CD4-positive, alpha-beta T cell (primary cell): ENCODE measurements at regions of chr17 and their contacts with region 1.

Region 1: GRCh38 chr17:28598799-28599310 is at the start of gene SPAG5:
- DNase-seq: peak; percentile 89 to 98 (median 95)
- ATAC-seq: peak; percentile 89
- H3K4me3 ChIP-seq: peak within 1 kb of the TSS; percentile 60
- H3K4me3 Mint-ChIP-seq: peak within 1 kb of the TSS; percentile 90
- H3K27ac ChIP-seq: peak within 1 kb of the TSS; percentile 92 to 99
- H3K27ac Mint-ChIP-seq: peak within 1 kb of the TSS; percentile 94
- H3K4me1 ChIP-seq: peaks cover 20% of the 10 kb centered on the region
- H3K4me1 Mint-ChIP-seq: peaks cover 24% of the 10 kb centered on the region
- H3K27me3 ChIP-seq: no peaks in the 10 kb centered on the region
- H3K27me3 Mint-ChIP-seq: no peaks in the 10 kb centered on the region
- CTCF ChIP-seq: no peak
- total RNA-seq, gene SPAG5: 15.4 to 17.0 TPM

Region 2: DNA sequence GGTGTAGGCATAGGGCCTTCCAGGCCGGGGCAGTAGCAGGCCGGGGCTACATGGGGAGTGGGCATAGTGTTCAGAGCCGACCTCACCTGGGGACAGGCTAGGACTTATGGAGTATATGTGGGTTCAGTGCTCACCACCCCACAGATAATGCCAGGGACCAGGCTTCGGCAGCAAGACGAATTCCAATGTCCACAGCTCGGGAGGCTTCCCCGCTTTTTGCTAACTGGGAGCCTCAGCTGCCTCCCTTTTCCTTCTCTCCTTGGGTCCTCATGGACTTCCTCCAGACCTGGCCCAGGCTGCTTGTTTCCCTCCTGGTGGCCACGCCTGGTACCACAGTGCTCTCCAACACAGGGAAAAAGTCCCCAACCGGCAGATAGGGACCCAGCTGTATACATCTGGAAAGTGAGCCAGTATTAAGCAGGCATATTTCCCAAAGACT is 172.8 kb before region 1 on chr17:
- CTCF ChIA-PET with region 1: no interaction called
- POLR2A ChIA-PET with region 1: no interaction called
- intact Hi-C with region 1: no loop called
- DNase-seq: no peak
- ATAC-seq: no peak
- H3K4me3 ChIP-seq: no peak overlapping the region
- H3K4me3 Mint-ChIP-seq: no peak overlapping the region
- H3K27ac ChIP-seq: no peak overlapping the region
- H3K27ac Mint-ChIP-seq: no peak overlapping the region
- H3K4me1 ChIP-seq: no peaks in the 10 kb centered on the region
- H3K4me1 Mint-ChIP-seq: no peaks in the 10 kb centered on the region
- H3K27me3 ChIP-seq: no peaks in the 10 kb centered on the region
- H3K27me3 Mint-ChIP-seq: peaks cover 22% of the 10 kb centered on the region
- CTCF ChIP-seq: no peak

Region 3: GRCh38 chr17:28571255-28572122 is 27.4 kb before region 1 on chr17 and contains the start of gene PIGS:
- CTCF ChIA-PET with region 1: interaction called, 4 read pairs
- POLR2A ChIA-PET with region 1: interaction called, 70 read pairs
- intact Hi-C with region 1: loop called (anchors 1 to 2 kb)
- DNase-seq: peak; percentile 78 to 95 (median 88)
- ATAC-seq: peak; percentile 96
- H3K4me3 ChIP-seq: peak within 1 kb of the TSS; percentile 95
- H3K4me3 Mint-ChIP-seq: peak within 1 kb of the TSS; percentile 94
- H3K27ac ChIP-seq: peak within 1 kb of the TSS; percentile 66 to 85
- H3K27ac Mint-ChIP-seq: peak within 1 kb of the TSS; percentile 91
- H3K4me1 ChIP-seq: peaks cover 55% of the 10 kb centered on the region
- H3K4me1 Mint-ChIP-seq: peaks cover 65% of the 10 kb centered on the region
- H3K27me3 ChIP-seq: no peaks in the 10 kb centered on the region
- H3K27me3 Mint-ChIP-seq: no peaks in the 10 kb centered on the region
- CTCF ChIP-seq: no peak
- total RNA-seq, gene PIGS: 73.8 to 76.4 TPM

Region 4: GRCh38 chr17:28576758-28577465 is 21.9 kb before region 1 on chr17 and contains the start of gene ALDOC:
- CTCF ChIA-PET with region 1: interaction called, 4 read pairs
- POLR2A ChIA-PET with region 1: interaction called, 70 read pairs
- intact Hi-C with region 1: loop called (anchors 1 to 2 kb)
- DNase-seq: peak; percentile 95 to 100 (median 98)
- ATAC-seq: peak; percentile 97
- H3K4me3 ChIP-seq: peak within 1 kb of the TSS; percentile 46
- H3K4me3 Mint-ChIP-seq: peak within 1 kb of the TSS; percentile 87
- H3K27ac ChIP-seq: peak within 1 kb of the TSS in 1 of 2 donors; percentile 41
- H3K27ac Mint-ChIP-seq: peak within 1 kb of the TSS; percentile 77
- H3K4me1 ChIP-seq: peaks cover 36% of the 10 kb centered on the region
- H3K4me1 Mint-ChIP-seq: peaks cover 31% of the 10 kb centered on the region
- H3K27me3 ChIP-seq: no peaks in the 10 kb centered on the region
- H3K27me3 Mint-ChIP-seq: no peaks in the 10 kb centered on the region
- CTCF ChIP-seq: no peak
- total RNA-seq, gene ALDOC: 21.8 to 22.7 TPM

Region 5: GRCh38 chr17:28661635-28662537 is 63.0 kb after region 1 on chr17 and contains the starts of genes SDF2 and SUPT6H:
- CTCF ChIA-PET with region 1: interaction called, 5 read pairs
- POLR2A ChIA-PET with region 1: interaction called, 10 read pairs
- intact Hi-C with region 1: no loop called
- DNase-seq: peak; percentile 88 to 97 (median 92)
- ATAC-seq: peak; percentile 83
- H3K4me3 ChIP-seq: peak within 1 kb of the TSS; percentile 81
- H3K4me3 Mint-ChIP-seq: peak within 1 kb of the TSS; percentile 99
- H3K27ac ChIP-seq: peak within 1 kb of the TSS; percentile 97 to 99
- H3K27ac Mint-ChIP-seq: peak within 1 kb of the TSS; percentile 99
- H3K4me1 ChIP-seq: peaks cover 45% of the 10 kb centered on the region
- H3K4me1 Mint-ChIP-seq: peaks cover 64% of the 10 kb centered on the region
- H3K27me3 ChIP-seq: no peaks in the 10 kb centered on the region
- H3K27me3 Mint-ChIP-seq: no peaks in the 10 kb centered on the region
- CTCF ChIP-seq: no peak
- total RNA-seq, gene SDF2: 30.3 to 32.0 TPM
- total RNA-seq, gene SUPT6H: 149 to 151 TPM